Motor neuron (in vitro differentiated cells): ENCODE measurements at regions of chr4 and their contacts with region 1.

Region 1: DNA sequence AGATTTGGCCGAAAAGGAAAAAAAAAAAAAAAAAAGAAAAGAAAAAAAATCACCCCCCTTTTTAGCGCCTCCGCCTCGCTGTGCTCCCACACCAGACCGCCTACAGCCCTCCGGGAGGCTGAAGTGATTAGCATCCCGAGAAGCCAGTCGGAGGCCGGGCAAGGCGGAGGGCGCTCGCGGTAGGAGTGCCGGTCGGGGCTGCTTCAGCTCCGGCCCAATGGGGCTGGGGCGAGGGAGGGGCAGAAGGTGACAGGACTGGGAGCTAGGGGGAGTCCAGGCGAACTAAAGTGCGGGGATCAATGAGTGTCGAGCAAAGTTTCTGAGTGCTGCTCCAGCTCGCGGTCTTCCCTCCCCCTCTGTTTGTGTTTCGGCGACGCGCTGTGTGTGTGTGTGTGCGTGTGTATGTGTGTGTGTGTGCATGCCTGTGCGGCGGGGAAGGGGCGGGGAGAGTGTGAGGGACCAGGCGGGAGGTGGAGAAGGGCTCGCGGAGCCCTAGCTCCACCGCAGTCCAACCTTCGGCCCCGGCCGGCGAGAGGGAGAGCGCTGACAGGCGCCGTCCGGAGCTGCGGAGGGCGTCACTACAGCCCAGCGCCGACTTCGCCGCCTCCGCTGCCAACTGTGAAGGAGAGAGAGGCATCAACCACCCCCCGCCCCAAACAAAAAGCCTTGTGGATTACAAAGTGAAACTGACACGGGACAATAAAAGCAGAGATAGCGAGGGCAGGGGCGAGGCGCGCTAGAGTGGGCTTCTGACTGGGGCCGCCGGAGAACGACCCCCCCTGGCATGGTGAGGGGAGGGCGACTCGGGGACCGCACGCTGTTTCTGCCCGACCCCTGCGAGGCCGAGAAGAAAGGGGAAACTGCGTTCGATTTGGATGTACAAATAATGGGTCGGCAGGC is at the start of gene FAT4:
- ATAC-seq: peak; percentile 83 to 91 (median 89)
- H3K4me3 ChIP-seq: peak within 1 kb of the TSS; percentile 50 to 77 (median 59)
- H3K27ac ChIP-seq: no peak within 1 kb of the TSS
- H3K4me1 ChIP-seq: peaks cover 3% of the 10 kb centered on the region in 2 donors
- total RNA-seq, gene FAT4: 6.1 to 17.3 (median 7.6) TPM

Region 2: GRCh38 chr4:125082729-125083417 is 232.1 kb before region 1 on chr4:
- in situ Hi-C with region 1: no loop called
- ATAC-seq: peak in 3 of 8 experiments; percentile 30 to 73 (median 63)
- H3K4me3 ChIP-seq: no peak overlapping the region
- H3K27ac ChIP-seq: no peak overlapping the region
- H3K4me1 ChIP-seq: no peaks in the 10 kb centered on the region

Region 3: GRCh38 chr4:125750828-125751466 is 436.0 kb after region 1 on chr4:
- in situ Hi-C with region 1: loop called in 1 of 9 experiments (anchors 10 kb)
- ATAC-seq: peak in 4 of 8 experiments; percentile 50 to 90 (median 67)
- H3K4me3 ChIP-seq: no peak overlapping the region
- H3K27ac ChIP-seq: no peak overlapping the region
- H3K4me1 ChIP-seq: no peaks in the 10 kb centered on the region

Region 4: GRCh38 chr4:126583509-126583908 is 1268.6 kb after region 1 on chr4:
- in situ Hi-C with region 1: loop called in 2 of 9 experiments (anchors 25 kb)
- ATAC-seq: peak in 3 of 8 experiments; percentile 75 to 80 (median 75)
- H3K4me3 ChIP-seq: no peak overlapping the region
- H3K27ac ChIP-seq: no peak overlapping the region
- H3K4me1 ChIP-seq: no peaks in the 10 kb centered on the region

Region 5: DNA sequence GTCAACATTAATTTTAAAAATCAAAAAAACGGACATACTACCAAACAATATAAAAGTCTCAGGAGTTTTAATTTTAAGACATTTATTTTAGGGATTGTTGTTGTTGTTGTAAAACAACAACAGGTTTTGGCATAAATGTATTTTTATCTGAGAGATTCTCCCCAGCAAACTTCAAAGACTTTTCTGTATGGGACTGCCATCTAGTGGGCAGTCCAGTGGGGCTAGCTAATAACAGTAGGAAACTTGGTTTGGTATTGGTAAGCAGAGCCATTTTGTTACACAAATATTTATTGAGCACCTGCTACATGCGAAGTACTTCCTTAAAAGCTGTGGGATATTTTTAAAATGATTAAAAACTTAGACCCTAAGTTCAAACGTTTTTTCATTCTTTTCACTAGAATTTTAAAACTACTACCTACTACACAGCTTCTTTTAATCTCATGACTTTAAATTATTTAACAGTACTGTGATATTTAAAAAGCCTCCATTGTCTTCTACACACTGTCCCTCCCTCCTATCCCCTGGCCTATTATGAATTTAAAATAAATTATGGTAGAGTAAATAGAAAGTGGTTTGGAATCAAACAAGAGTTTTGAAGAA is 1289.4 kb after region 1 on chr4:
- in situ Hi-C with region 1: loop called in 4 of 9 experiments (anchors 25 kb)
- ATAC-seq: peak in 4 of 8 experiments; percentile 40 to 77 (median 58)
- H3K4me3 ChIP-seq: no peak overlapping the region
- H3K27ac ChIP-seq: no peak overlapping the region
- H3K4me1 ChIP-seq: no peaks in the 10 kb centered on the region